ENCODE measurements at regions of chr15 and their contacts with region 1.

Region 1: GRCh38 chr15:89760303-89761008 is 9.4 kb upstream of the MESP1 start:
- DNase-seq: peak; percentile 72 to 91
- ATAC-seq: peak; percentile 93 to 97
- H3K4me3 ChIP-seq: no peak overlapping the region
- H3K27ac ChIP-seq: no peak overlapping the region
- H3K4me1 ChIP-seq: peaks cover 4% of the 10 kb centered on the region; the same call in 2 of the 3 replicates
- CTCF ChIP-seq: peak; percentile 98
- EP300 ChIP-seq: no peak
- POLR2A ChIP-seq: no peak
- RAD21 ChIP-seq: peak; percentile 97 to 98

Region 2: DNA sequence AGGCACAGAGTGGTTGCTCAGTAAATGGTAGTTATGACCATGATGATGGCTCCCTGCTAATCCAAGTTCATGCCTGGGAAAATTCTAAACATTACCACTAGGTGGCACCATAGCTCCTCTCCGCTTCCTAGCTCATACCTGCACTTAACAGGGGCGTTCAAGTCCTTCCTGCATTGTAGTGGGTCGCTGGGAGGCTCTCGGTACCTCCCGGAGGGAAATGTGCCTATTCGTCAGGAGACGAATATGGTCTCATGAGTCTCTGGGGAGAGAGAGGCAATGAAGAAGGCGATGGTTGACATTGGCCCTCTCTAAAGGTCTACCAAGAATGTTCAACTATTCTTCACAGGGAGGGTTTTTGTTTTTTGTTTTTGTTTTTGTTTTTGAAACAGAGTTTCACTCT is 20.3 kb before region 1 on chr15:
- CTCF ChIA-PET with region 1: interaction called, 55 read pairs
- POLR2A ChIA-PET with region 1: no interaction called
- DNase-seq: peak; percentile 83 to 85
- ATAC-seq: peak; percentile 87 to 95
- H3K4me3 ChIP-seq: no peak overlapping the region
- H3K27ac ChIP-seq: peak overlapping the region in 1 of 2 experiments; percentile 36; a peak in 1 of 6 replicates
- H3K4me1 ChIP-seq: no peaks in the 10 kb centered on the region
- CTCF ChIP-seq: peak; percentile 96
- EP300 ChIP-seq: no peak
- POLR2A ChIP-seq: no peak
- RAD21 ChIP-seq: peak; percentile 89 to 95

Region 3: GRCh38 chr15:89802231-89802928 is 41.9 kb after region 1 on chr15:
- CTCF ChIA-PET with region 1: interaction called, 22 read pairs
- POLR2A ChIA-PET with region 1: no interaction called
- DNase-seq: no peak
- ATAC-seq: no peak; a peak in 1 of 6 replicates
- H3K4me3 ChIP-seq: no peak overlapping the region
- H3K27ac ChIP-seq: 0 out of 6 replicates have a peak overlapping the region, but pooled peaks of 1 of the 2 experiments have one; percentile 1
- H3K4me1 ChIP-seq: peaks cover 21% of the 10 kb centered on the region; the same call in 2 of the 3 replicates
- CTCF ChIP-seq: no peak
- EP300 ChIP-seq: no peak
- POLR2A ChIP-seq: no peak
- RAD21 ChIP-seq: no peak

Region 4: GRCh38 chr15:89828241-89829082 is 68.0 kb after region 1 on chr15:
- CTCF ChIA-PET with region 1: interaction called, 38 read pairs
- POLR2A ChIA-PET with region 1: no interaction called
- DNase-seq: peak in 1 of 2 experiments; percentile 32
- ATAC-seq: peak; percentile 42 to 65; a peak in 5 of 6 replicates
- H3K4me3 ChIP-seq: no peak overlapping the region
- H3K27ac ChIP-seq: peak overlapping the region in 1 of 2 experiments; percentile 68; a peak in 3 of 6 replicates
- H3K4me1 ChIP-seq: peaks cover 27% of the 10 kb centered on the region
- CTCF ChIP-seq: no peak
- EP300 ChIP-seq: no peak
- POLR2A ChIP-seq: no peak
- RAD21 ChIP-seq: no peak

Region 5: DNA sequence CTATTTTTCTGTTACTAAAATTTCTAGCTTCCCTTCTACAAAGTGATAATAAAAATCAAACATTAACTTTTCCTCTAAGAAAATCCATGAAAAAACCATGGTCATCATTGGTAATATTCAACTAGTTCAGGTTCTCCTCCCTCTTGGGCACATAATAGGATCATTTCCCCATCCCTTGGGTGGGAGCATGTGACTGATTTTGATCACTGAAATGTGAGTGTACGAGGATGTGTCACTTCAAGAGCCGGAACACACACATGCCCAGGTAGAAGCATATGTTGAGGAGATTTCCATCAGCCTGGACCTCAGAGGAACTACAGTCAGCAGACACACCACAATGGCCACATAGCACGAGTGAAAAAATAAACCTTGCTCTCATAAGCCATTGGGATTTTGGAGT is 97.2 kb after region 1 on chr15:
- CTCF ChIA-PET with region 1: interaction called, 17 read pairs
- POLR2A ChIA-PET with region 1: no interaction called
- DNase-seq: peak; percentile 49 to 60
- ATAC-seq: peak; percentile 59 to 78; a peak in 5 of 6 replicates
- H3K4me3 ChIP-seq: no peak overlapping the region
- H3K27ac ChIP-seq: peak overlapping the region; percentile 56 to 66; a peak in 4 of 6 replicates
- H3K4me1 ChIP-seq: peaks cover 29% of the 10 kb centered on the region
- CTCF ChIP-seq: no peak
- EP300 ChIP-seq: no peak
- POLR2A ChIP-seq: no peak
- RAD21 ChIP-seq: no peak

Region 6: DNA sequence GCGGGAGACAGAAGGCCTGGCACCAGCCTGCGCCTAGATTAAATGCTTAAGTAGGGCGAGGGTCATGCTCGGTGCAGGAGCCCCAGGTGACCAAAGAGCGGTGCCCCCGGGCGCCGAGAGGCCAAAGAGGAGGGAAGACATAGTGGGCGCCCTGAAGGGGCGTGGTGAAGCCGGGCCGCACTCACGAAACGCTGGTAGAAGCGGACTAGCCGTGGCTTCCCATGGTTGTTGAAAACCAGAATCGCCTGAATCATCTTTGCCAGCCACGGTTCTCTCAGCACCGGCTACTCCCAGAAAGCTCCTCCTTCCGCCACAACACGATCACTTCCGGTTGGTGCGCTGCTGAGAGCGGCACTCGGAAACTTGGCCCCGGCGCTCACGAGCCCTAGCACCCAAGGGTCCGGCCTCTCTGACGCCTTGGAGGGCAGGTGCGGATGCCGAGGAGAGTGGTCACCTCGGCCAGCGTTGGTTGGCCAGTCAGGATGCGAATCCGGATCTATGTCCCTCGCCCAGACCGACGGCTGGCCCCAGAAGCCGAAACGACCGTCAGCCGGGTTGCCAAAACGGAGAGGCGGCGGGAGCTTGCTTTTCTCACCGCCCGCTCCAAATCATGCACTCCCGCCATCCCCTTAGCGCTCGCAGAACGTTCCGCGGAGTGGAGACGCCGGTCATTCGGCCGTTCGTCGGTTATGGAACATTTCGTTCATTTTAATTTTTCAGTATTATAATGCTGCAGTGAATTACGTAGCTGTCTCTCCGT is 133.4 kb after region 1 on chr15 and contains the start of gene AP3S2:
- CTCF ChIA-PET with region 1: interaction called, 239 read pairs
- POLR2A ChIA-PET with region 1: no interaction called
- DNase-seq: peak; percentile 91 to 98
- ATAC-seq: peak; percentile 95 to 97
- H3K4me3 ChIP-seq: peak within 1 kb of the TSS; percentile 87
- H3K27ac ChIP-seq: peak within 1 kb of the TSS; percentile 89 to 92
- H3K4me1 ChIP-seq: peaks cover 14% of the 10 kb centered on the region; the same call in 2 of the 3 replicates
- CTCF ChIP-seq: no peak
- EP300 ChIP-seq: no peak; a peak in 1 of 5 replicates
- POLR2A ChIP-seq: peak; percentile 81
- RAD21 ChIP-seq: peak; percentile 6 to 46; a peak in 3 of 5 replicates
- polyA plus RNA-seq, gene AP3S2: 56.7 and 85.9 TPM in 2 replicates

Region 7: DNA sequence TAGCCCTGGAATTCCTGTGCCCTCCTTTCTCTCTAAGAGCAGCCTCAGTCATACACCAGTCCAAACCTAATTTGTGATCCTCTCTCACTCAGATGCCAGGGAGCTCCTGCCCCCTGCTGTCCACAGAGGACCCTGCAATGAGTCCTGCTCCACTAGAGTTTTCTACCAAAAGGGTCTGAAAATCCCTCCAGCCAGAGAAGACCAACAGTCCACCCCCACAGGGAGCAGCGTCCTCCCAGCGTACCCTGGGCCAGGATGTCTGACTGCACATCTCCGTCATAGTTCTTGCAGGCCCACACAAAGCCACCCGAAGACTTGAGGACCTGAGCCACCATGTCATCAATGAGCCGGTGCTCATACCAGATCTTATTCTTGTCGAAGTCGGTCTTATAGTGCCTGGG is 326.4 kb after region 1 on chr15:
- CTCF ChIA-PET with region 1: interaction called, 13 read pairs
- POLR2A ChIA-PET with region 1: no interaction called
- DNase-seq: peak; percentile 68 to 79
- ATAC-seq: peak; percentile 74 to 84; a peak in 5 of 6 replicates
- H3K4me3 ChIP-seq: no peak overlapping the region
- H3K27ac ChIP-seq: 0 out of 6 replicates have a peak overlapping the region, but pooled peaks of 1 of the 2 experiments have one; percentile 13
- H3K4me1 ChIP-seq: peaks cover 7% of the 10 kb centered on the region; the same call in 1 of the 3 replicates
- CTCF ChIP-seq: peak; percentile 79
- EP300 ChIP-seq: no peak
- POLR2A ChIP-seq: no peak
- RAD21 ChIP-seq: peak; percentile 79 to 94